Kidney (tissue), 22 donors: ENCODE measurements at regions of chr2 and their contacts with region 1.

Region 1: GRCh38 chr2:226649871-226650660 is 149.6 kb downstream of the IRS1 start:
- DNase-seq: peak; percentile 65 to 94 (median 85)
- H3K4me3 ChIP-seq: no peak overlapping the region
- H3K27ac ChIP-seq: peak overlapping the region; percentile 63 to 66
- H3K4me1 ChIP-seq: peaks cover 0 to 27% (median 15%) of the 10 kb centered on the region in 3 donors
- H3K27me3 ChIP-seq: no peaks in the 10 kb centered on the region
- CTCF ChIP-seq: no peak

Region 2: DNA sequence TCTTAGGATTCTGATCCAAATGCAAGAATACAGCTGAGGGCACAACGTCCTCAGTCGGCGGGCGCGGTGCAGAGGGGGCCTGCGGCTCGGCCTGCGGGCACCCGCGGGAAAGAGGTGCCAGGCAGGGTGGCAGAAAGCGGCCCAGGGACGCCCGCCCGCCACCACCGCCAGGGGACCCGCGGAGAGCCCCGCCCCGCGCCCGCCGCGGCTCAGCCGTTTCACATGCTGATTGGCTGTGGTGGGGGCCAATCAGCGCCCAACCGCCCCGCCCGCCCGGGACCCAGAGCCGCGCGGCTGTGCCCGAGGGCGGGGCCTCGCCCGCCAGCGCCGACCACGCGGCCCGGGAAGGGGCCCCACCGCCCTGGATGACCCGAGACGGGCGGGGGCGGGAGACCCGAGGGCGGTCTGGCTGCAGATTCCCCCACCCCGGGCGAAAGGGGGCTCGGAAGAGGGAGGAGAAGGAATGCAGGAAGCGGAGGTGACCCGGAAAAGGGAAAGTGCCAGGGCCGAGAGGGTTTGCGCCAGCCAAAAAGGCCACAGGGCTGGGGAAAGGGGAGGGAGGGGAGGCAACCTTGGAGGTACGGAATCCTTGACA is 141.5 kb after region 1 on chr2:
- intact Hi-C with region 1: loop called (anchors 10 kb)
- DNase-seq: peak; percentile 92 to 97 (median 94)
- H3K4me3 ChIP-seq: peak overlapping the region; percentile 69 to 79 (median 73)
- H3K27ac ChIP-seq: peak overlapping the region; percentile 94 to 96
- H3K4me1 ChIP-seq: peaks cover 3 to 22% (median 13%) of the 10 kb centered on the region in 3 donors
- H3K27me3 ChIP-seq: no peaks in the 10 kb centered on the region
- CTCF ChIP-seq: peak; percentile 36